ENCODE measurements at regions of chr10 and their contacts with region 1.

Region 1: DNA sequence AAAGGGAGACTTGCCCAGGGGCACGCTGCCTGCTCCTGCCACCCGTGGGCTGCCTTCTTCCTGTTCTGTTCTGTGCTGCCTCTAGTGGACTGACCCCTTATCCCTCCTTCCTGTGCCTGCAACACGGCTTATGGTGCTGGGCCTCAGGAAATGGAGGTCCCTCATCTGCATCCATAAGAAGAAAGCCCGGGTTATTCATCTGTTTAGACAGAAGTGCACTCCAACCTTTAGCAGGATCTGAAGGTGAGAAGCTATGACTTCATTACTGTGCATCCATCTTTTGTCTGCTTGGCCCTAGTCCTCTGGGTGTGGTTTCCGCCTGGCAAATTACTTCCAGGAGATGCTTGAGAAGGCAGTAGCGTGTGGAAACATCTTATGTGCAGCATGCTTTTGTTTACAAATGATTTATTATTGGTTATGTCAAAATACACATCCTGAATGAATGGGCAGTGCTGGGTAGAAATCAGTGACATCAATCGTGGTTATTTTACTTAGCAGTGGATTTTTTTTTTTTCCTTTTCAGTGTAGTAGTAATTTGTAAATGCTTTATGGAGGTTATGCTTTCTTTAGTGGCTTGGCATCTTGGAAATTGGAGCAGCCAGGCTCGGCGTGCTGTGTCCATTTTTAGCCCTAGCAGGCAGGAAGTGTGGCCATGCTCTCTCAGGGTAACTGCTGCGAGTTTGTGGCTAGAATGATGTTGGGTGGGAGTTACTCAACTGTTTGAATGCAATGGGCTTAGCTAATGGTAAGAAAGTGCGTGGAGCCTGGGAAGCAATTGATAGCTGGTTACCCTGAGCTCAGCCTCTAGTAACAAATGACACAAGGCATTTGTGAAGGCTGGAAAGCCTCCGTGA is 12.7 kb downstream of the PTPRE start:
- DNase-seq: no peak
- ATAC-seq: no peak

Region 2: GRCh38 chr10:127977357-127978009 is 57.8 kb after region 1 on chr10:
- intact Hi-C with region 1: loop called (anchors 5 kb)
- DNase-seq: peak; percentile 85
- ATAC-seq: peak; percentile 96

Region 3: GRCh38 chr10:127990846-127991542 is 71.3 kb after region 1 on chr10:
- intact Hi-C with region 1: no loop called
- DNase-seq: no peak
- ATAC-seq: no peak

Measured in Right ventricle myocardium inferior (tissue), 1 donor.